Caco-2 (cell line): ENCODE measurements at regions of chr10 and their contacts with region 1.

Region 1: DNA sequence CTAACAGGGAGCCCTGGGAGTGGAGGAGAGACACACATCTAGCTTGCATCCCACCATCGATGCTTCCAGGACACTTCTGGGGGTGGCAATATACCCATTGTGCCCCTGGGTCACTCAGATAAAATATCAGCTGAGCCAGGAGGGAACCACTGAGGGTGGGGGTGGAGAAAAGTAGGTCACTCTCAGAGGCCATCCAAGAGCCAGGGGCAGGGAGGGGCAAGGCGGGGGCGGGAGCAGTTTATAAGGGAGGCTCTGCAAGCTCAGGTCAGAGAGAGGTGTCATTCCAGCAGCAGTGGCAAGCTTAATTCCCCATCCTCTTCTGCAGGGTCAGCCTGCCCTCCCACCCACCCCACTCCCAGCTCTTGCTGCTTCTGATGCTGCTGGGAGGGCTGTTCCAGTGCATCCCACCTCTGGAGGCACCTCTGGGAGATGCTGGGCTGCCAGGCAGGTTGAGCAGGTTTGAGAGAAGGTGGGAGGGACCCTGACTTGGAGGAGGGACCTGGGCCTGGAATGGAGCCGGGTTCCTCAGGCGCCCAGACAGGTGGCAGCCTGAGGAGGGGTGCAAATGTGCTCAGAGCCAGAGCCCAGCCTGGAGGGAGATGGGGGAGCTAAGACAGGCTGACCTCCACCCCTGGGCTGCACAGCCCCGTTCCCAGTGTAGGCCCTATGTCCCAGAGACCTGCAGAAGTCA is 20.1 kb upstream of the TLX1 start:
- DNase-seq: peak; percentile 76 to 78
- H3K4me3 ChIP-seq: no peak overlapping the region
- H3K4me3 Mint-ChIP-seq: peak overlapping the region; percentile 44
- H3K27ac Mint-ChIP-seq: peak overlapping the region; percentile 92
- H3K4me1 ChIP-seq: peaks cover 30% of the 10 kb centered on the region
- H3K4me1 Mint-ChIP-seq: peaks cover 36% of the 10 kb centered on the region
- H3K27me3 ChIP-seq: no peaks in the 10 kb centered on the region
- H3K27me3 Mint-ChIP-seq: no peaks in the 10 kb centered on the region
- CTCF ChIP-seq: no peak

Region 2: GRCh38 chr10:101130984-101131961 is 20.3 kb after region 1 on chr10 and contains the start of gene TLX1:
- CTCF ChIA-PET with region 1: interaction called, 6 read pairs
- POLR2A ChIA-PET with region 1: no interaction called
- intact Hi-C with region 1: loop called (anchors 1 kb)
- DNase-seq: peak; percentile 62 to 66
- H3K4me3 ChIP-seq: peak within 1 kb of the TSS; percentile 51
- H3K4me3 Mint-ChIP-seq: peak within 1 kb of the TSS; percentile 69
- H3K27ac Mint-ChIP-seq: no peak within 1 kb of the TSS
- H3K4me1 ChIP-seq: peaks cover 23% of the 10 kb centered on the region
- H3K4me1 Mint-ChIP-seq: peaks cover 12% of the 10 kb centered on the region
- H3K27me3 ChIP-seq: no peaks in the 10 kb centered on the region
- H3K27me3 Mint-ChIP-seq: no peaks in the 10 kb centered on the region
- CTCF ChIP-seq: peak in 1 of 2 experiments; percentile 21
- total RNA-seq, gene TLX1: 1.9 and 2.3 TPM in 2 replicates